CD8-positive, alpha-beta memory T cell (primary cell): ENCODE measurements at regions of chr19 and their contacts with region 1.

Region 1: GRCh38 chr19:3798137-3798536 is 12.0 kb upstream of the MATK start:
- DNase-seq: peak in 2 of 5 donors; percentile 58 to 70
- H3K4me3 ChIP-seq: no peak overlapping the region
- H3K4me3 Mint-ChIP-seq: peak overlapping the region; percentile 28 to 80 (median 67)
- H3K27ac ChIP-seq: no peak overlapping the region
- H3K27ac Mint-ChIP-seq: peak overlapping the region; percentile 68 to 93 (median 80)
- H3K4me1 ChIP-seq: peaks cover 32% of the 10 kb centered on the region
- H3K4me1 Mint-ChIP-seq: peaks cover 33 to 56% (median 33%) of the 10 kb centered on the region in 3 donors
- H3K27me3 ChIP-seq: no peaks in the 10 kb centered on the region
- H3K27me3 Mint-ChIP-seq: peaks cover 0 to 2% of the 10 kb centered on the region in 2 donors

Region 2: DNA sequence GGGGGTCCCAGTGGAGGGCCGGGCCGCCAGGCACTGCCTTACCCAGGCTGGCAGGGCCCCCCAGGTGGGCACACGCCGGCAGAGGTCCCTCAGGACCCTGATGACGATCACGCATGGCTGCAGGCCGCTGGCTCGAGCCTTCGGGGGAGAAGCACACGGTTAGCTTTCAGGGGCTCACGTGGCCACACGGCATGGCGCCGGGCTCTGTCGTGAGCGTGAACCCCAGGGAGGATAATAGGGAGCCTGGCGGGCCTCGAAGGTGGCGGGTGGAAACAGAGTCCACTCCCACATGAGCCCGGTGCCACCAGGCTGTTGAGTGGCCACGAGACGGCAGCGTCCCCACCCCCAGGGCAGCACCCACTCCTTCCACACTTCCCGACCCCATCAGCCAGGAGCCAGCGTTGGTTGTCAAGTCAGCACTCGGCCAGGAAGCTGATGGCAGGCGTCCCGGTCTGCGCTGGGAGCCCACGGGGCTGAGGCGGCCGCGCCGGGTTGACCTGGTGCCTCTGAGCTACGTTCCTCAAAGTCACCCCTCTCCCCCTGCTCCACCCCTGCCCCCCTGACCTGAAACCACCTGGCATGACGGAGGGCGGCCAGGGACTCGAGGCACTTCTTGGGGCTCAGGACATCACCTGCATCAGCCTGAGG is 12.7 kb after region 1 on chr19:
- CTCF ChIA-PET with region 1: interaction called, 4 read pairs
- POLR2A ChIA-PET with region 1: interaction called, 10 read pairs
- DNase-seq: no peak
- H3K4me3 ChIP-seq: no peak overlapping the region
- H3K4me3 Mint-ChIP-seq: peak overlapping the region in 1 of 7 donors; percentile 51
- H3K27ac ChIP-seq: no peak overlapping the region
- H3K27ac Mint-ChIP-seq: peak overlapping the region in 2 of 8 donors; percentile 43 to 70
- H3K4me1 ChIP-seq: peaks cover 39% of the 10 kb centered on the region
- H3K4me1 Mint-ChIP-seq: peaks cover 43 to 67% (median 50%) of the 10 kb centered on the region in 3 donors
- H3K27me3 ChIP-seq: no peaks in the 10 kb centered on the region
- H3K27me3 Mint-ChIP-seq: no peaks in the 10 kb centered on the region